Activated CD8-positive, alpha-beta T cell treated with anti-CD3 and anti-CD28 coated beads, Interleukin-2, amount 10 ng/mL, durations not matched to agents 7 days and 5 days (primary cell): ENCODE measurements at regions of chr3 and their contacts with region 1.

Region 1: GRCh38 chr3:160027541-160028195 is 39.0 kb downstream of the IL12A start:
- DNase-seq: no peak
- ATAC-seq: peak; percentile 62
- H3K4me3 Mint-ChIP-seq: no peak overlapping the region
- H3K27ac Mint-ChIP-seq: peak overlapping the region; percentile 16
- H3K4me1 Mint-ChIP-seq: peaks cover 14% of the 10 kb centered on the region
- H3K27me3 Mint-ChIP-seq: peaks cover 3% of the 10 kb centered on the region

Region 2: GRCh38 chr3:160003520-160004128 is 24.0 kb before region 1 on chr3:
- CTCF ChIA-PET with region 1: interaction called, 20 read pairs
- POLR2A ChIA-PET with region 1: no interaction called
- DNase-seq: peak; percentile 52
- ATAC-seq: peak; percentile 74
- H3K4me3 Mint-ChIP-seq: no peak overlapping the region
- H3K27ac Mint-ChIP-seq: no peak overlapping the region
- H3K4me1 Mint-ChIP-seq: no peaks in the 10 kb centered on the region
- H3K27me3 Mint-ChIP-seq: no peaks in the 10 kb centered on the region